ENCODE measurements at regions of chr1 and their contacts with region 1.

Region 1: DNA sequence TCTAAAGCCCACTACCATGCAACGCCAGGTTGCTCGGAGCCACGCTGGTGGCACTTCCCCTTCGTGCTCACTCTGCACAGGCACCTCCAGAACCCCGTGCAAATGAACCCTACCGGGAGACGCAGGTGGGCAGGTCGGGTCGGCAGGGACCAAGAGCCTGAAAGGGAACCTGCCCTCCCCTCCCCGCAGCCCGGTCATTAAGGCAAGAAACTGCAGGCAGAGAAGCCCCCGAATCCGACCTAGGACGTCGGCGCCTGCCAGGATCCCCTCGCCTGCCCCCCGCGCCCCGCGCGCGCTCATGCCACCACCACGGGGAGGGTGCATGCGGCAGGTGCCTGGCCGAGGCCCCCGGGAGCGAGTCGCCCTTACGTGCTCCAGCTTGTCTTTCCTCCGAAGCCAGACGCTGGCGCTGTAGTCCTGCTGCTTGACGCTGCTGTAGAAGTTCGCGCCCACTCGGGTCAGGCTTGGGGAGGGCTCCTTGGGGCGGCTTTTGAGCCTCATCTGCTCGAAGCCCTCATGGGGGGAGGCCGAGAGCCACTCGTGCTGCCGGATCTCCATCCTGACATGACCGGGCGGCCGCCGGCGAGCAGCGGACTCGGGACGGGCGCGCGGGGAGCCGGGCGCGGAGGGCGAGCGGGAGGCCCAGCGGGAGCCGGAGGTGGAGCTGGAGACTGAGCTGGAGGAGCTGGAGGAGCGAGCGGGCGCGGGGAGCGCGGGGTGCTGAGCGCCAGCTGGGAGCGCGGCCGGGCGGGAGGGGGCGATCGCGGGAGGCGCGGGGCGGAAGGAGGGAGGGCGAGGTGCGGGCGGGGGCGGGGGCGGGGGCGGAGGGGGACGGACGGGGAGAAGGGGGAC is 552 bp downstream of the PLD5 start:
- DNase-seq: peak; percentile 74
- H3K4me3 Mint-ChIP-seq: peak overlapping the region; percentile 79
- H3K27ac Mint-ChIP-seq: no peak overlapping the region
- H3K4me1 Mint-ChIP-seq: peaks cover 26% of the 10 kb centered on the region
- H3K27me3 Mint-ChIP-seq: no peaks in the 10 kb centered on the region
- CTCF ChIP-seq: peak; percentile 41

Region 2: GRCh38 chr1:242377781-242378180 is 146.2 kb before region 1 on chr1:
- CTCF ChIA-PET with region 1: no interaction called
- POLR2A ChIA-PET with region 1: no interaction called
- intact Hi-C with region 1: no loop called
- DNase-seq: no peak
- H3K4me3 Mint-ChIP-seq: no peak overlapping the region
- H3K27ac Mint-ChIP-seq: no peak overlapping the region
- H3K4me1 Mint-ChIP-seq: no peaks in the 10 kb centered on the region
- H3K27me3 Mint-ChIP-seq: no peaks in the 10 kb centered on the region
- CTCF ChIP-seq: no peak

Region 3: DNA sequence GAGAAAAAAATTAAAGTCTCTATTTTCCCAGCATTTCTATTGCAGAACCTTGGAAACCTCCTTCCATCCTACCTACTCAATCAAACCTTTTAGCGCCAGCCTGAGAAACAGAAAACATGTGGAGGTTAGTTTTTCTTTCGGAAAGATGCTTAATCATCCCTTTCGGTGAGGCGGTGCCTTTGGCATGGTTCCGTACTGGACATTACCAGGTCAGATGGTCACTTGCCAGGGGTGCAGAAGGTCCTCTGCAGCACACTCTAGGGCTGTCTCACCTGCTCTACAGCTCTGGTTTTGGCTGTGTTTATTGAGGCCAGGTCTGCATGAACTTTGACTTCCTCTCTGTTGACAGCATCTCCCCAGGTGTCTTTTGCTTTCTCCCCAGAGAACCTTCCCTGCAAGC is 121.0 kb before region 1 on chr1:
- CTCF ChIA-PET with region 1: no interaction called
- POLR2A ChIA-PET with region 1: no interaction called
- intact Hi-C with region 1: no loop called
- DNase-seq: no peak
- H3K4me3 Mint-ChIP-seq: no peak overlapping the region
- H3K27ac Mint-ChIP-seq: no peak overlapping the region
- H3K4me1 Mint-ChIP-seq: peaks cover 5% of the 10 kb centered on the region
- H3K27me3 Mint-ChIP-seq: no peaks in the 10 kb centered on the region
- CTCF ChIP-seq: no peak

Region 4: DNA sequence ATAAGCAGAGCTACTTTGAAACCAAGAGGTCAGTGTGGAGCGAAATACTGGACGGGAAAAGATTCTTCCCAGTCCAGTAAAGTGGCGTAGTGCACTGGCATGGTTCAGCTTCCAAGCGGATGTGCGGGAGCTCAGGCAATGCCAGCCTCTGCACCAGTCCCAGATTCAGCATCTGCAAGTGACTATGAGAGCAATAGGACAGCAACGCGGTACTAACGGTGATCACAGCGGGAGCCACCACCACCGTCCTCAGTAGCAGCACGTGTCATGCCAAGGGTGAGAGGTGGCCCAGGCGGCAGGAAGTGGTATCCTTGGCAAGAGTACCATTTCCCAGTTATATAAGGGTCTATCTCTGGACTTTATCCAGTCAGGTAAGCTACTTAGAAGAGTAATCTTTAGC is 17.2 kb before region 1 on chr1:
- CTCF ChIA-PET with region 1: interaction called, 13 read pairs
- POLR2A ChIA-PET with region 1: interaction called, 3 read pairs
- intact Hi-C with region 1: no loop called
- DNase-seq: no peak
- H3K4me3 Mint-ChIP-seq: no peak overlapping the region
- H3K27ac Mint-ChIP-seq: no peak overlapping the region
- H3K4me1 Mint-ChIP-seq: no peaks in the 10 kb centered on the region
- H3K27me3 Mint-ChIP-seq: no peaks in the 10 kb centered on the region
- CTCF ChIP-seq: no peak

Region 5: DNA sequence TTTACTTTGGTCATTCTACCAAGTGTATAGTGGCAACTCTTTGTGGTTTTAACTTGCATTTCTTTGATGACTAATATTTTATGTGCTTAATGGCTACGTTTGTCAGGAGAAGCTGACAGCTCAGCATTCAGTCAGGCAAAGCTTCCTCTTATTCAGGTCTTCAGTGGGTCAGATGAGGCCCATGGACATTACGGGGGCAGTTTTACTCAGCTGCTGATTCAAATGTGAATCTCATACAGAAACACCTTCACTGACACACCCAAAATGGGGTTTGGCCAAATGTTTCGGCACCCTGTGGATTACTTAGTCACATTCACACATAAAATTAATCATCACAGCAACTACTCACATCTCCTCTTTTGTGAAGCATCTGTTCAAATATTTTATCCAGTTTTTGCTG is 105.5 kb after region 1 on chr1:
- CTCF ChIA-PET with region 1: interaction called, 5 read pairs
- POLR2A ChIA-PET with region 1: interaction called, 3 read pairs
- intact Hi-C with region 1: loop called (anchors 1 kb)
- DNase-seq: peak; percentile 85
- H3K4me3 Mint-ChIP-seq: no peak overlapping the region
- H3K27ac Mint-ChIP-seq: peak overlapping the region; percentile 77
- H3K4me1 Mint-ChIP-seq: peaks cover 14% of the 10 kb centered on the region
- H3K27me3 Mint-ChIP-seq: no peaks in the 10 kb centered on the region
- CTCF ChIP-seq: no peak

Region 6: GRCh38 chr1:242641461-242641860 is 117.5 kb after region 1 on chr1:
- CTCF ChIA-PET with region 1: no interaction called
- POLR2A ChIA-PET with region 1: no interaction called
- intact Hi-C with region 1: loop called (anchors 5 kb)
- DNase-seq: no peak
- H3K4me3 Mint-ChIP-seq: no peak overlapping the region
- H3K27ac Mint-ChIP-seq: no peak overlapping the region
- H3K4me1 Mint-ChIP-seq: no peaks in the 10 kb centered on the region
- H3K27me3 Mint-ChIP-seq: no peaks in the 10 kb centered on the region
- CTCF ChIP-seq: no peak

Region 7: DNA sequence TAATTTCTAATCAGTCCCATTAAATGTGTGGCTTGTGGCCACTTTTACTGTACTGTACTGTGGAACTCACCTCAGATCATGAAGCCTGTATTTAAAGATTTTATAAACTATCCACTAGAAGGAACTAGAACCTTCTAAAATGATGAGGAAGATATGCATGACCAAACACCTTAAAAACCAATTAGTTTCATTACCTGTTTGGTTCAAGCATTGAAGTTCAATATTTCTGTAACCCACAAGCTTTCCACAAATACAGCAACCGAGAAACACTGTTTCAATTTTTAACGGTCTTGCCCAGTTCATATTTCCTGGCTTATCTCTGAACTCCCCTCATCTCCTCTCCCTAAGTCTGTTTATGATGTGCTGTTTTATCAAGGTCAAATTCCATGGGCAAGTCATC is 264.8 kb after region 1 on chr1:
- CTCF ChIA-PET with region 1: interaction called, 3 read pairs
- POLR2A ChIA-PET with region 1: no interaction called
- intact Hi-C with region 1: loop called (anchors 5 kb)
- DNase-seq: no peak
- H3K4me3 Mint-ChIP-seq: no peak overlapping the region
- H3K27ac Mint-ChIP-seq: no peak overlapping the region
- H3K4me1 Mint-ChIP-seq: peaks cover 22% of the 10 kb centered on the region
- H3K27me3 Mint-ChIP-seq: no peaks in the 10 kb centered on the region
- CTCF ChIP-seq: no peak

Region 8: GRCh38 chr1:242828199-242828598 is 304.3 kb after region 1 on chr1:
- CTCF ChIA-PET with region 1: no interaction called
- POLR2A ChIA-PET with region 1: interaction called, 3 read pairs
- intact Hi-C with region 1: loop called (anchors 1 kb)
- DNase-seq: no peak
- H3K4me3 Mint-ChIP-seq: no peak overlapping the region
- H3K27ac Mint-ChIP-seq: peak overlapping the region; percentile 5
- H3K4me1 Mint-ChIP-seq: peaks cover 46% of the 10 kb centered on the region
- H3K27me3 Mint-ChIP-seq: no peaks in the 10 kb centered on the region
- CTCF ChIP-seq: peak; percentile 19

Region 9: GRCh38 chr1:243325305-243325890 is 801.5 kb after region 1 on chr1:
- CTCF ChIA-PET with region 1: no interaction called
- POLR2A ChIA-PET with region 1: no interaction called
- intact Hi-C with region 1: loop called (anchors 1 kb)
- DNase-seq: peak; percentile 82
- H3K4me3 Mint-ChIP-seq: no peak overlapping the region
- H3K27ac Mint-ChIP-seq: no peak overlapping the region
- H3K4me1 Mint-ChIP-seq: no peaks in the 10 kb centered on the region
- H3K27me3 Mint-ChIP-seq: no peaks in the 10 kb centered on the region
- CTCF ChIP-seq: peak; percentile 97

Measured in MCF 10A (cell line).